ENCODE measurements at regions of chr14 and their contacts with region 1.

Region 1: GRCh38 chr14:21437063-21437901 is 18.6 kb downstream of the CHD8 start:
- DNase-seq: peak; percentile 99
- H3K4me3 ChIP-seq: peak overlapping the region; percentile 81 to 97
- H3K27ac ChIP-seq: peak overlapping the region; percentile 87 to 94
- H3K4me1 ChIP-seq: peaks cover 0 to 30% (median 18%) of the 10 kb centered on the region in 4 donors
- H3K27me3 ChIP-seq: no peaks in the 10 kb centered on the region
- CTCF ChIP-seq: peak in 1 of 2 experiments; percentile 11

Region 2: GRCh38 chr14:21455911-21456667 is 18.8 kb after region 1 on chr14 and contains the start of gene CHD8:
- intact Hi-C with region 1: loop called (anchors 1 kb)
- DNase-seq: peak; percentile 100
- H3K4me3 ChIP-seq: peak within 1 kb of the TSS; percentile 84 to 91
- H3K27ac ChIP-seq: peak within 1 kb of the TSS; percentile 84 to 95
- H3K4me1 ChIP-seq: peaks cover 0 to 32% (median 18%) of the 10 kb centered on the region in 4 donors
- H3K27me3 ChIP-seq: no peaks in the 10 kb centered on the region
- CTCF ChIP-seq: peak; percentile 46 to 48

Region 3: DNA sequence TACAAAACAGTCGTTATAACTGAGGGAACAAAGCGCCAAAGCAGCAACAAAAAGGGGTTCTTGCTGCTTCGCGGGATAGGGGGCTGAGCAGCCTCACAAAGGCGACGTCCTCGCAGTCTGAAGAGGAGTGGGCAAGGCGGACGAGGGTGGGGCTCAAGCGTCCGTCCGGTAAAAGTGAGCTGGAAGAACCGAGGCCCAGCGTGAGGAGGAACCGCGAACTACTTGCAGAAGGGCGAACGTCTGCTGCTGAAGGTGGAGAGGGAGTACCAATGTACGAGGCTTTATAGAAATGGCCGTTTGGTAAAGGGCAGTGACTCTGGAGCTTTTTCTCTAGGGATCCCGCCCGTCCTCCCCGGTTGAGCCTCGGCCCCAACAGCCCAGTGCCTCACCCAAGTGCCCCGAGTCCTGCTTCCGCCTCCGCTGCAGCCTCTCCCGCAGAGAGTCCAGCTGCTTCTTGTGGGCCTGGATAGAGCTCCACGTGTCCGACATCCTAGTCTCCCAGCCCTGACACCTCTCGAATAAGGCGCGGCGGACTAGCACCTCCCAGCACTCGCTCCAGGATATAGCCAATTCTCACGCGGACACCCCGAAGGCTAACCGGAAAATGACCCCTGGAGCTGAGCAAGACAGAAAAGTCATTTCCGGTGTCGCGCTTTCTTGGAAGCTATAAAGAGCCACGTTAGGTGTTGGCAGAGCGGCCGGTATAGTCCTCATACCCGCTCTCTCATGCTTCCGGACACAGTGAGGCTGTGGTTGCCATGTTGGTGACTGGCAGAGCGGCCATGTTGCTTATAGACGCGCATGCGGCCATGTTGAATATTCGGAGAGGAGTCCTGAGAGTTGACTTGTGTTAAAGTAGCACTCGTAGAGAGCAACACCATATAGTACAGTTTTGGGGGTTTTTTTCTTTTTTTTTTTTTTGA is 73.7 kb after region 1 on chr14 and contains the start of gene METTL3:
- intact Hi-C with region 1: loop called (anchors 5 kb)
- DNase-seq: peak; percentile 99
- H3K4me3 ChIP-seq: peak within 1 kb of the TSS; percentile 65 to 74
- H3K27ac ChIP-seq: peak within 1 kb of the TSS; percentile 71 to 85
- H3K4me1 ChIP-seq: peaks cover 0 to 21% (median 15%) of the 10 kb centered on the region in 4 donors
- H3K27me3 ChIP-seq: no peaks in the 10 kb centered on the region
- CTCF ChIP-seq: no peak

Region 4: DNA sequence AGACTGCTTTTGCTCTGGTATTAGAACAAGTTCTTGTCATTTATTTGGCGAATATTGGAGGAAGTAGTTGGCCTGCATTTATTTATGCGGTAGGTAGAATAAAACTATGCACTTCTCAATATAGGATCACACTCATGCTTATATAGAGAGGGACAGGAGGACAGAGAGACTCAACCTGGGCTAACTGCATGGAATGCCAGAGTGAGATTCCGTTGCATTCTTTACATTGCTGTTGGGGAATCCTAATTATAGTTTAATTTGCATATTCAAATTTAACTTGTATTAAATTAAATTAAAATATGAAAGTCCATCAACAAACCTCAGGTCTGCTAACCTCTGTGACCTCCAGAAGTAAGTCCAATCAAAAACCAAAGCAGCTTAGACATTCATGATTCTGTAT is 116.0 kb after region 1 on chr14:
- intact Hi-C with region 1: no loop called
- DNase-seq: no peak
- H3K4me3 ChIP-seq: no peak overlapping the region
- H3K27ac ChIP-seq: no peak overlapping the region
- H3K4me1 ChIP-seq: peaks cover 0 to 6% (median 2%) of the 10 kb centered on the region in 4 donors
- H3K27me3 ChIP-seq: no peaks in the 10 kb centered on the region
- CTCF ChIP-seq: no peak

Region 5: GRCh38 chr14:21589317-21589716 is 152.0 kb after region 1 on chr14:
- intact Hi-C with region 1: no loop called
- DNase-seq: no peak
- H3K4me3 ChIP-seq: no peak overlapping the region
- H3K27ac ChIP-seq: no peak overlapping the region
- H3K4me1 ChIP-seq: no peaks in the 10 kb centered on the region
- H3K27me3 ChIP-seq: peaks cover 0 to 5% of the 10 kb centered on the region in 2 donors
- CTCF ChIP-seq: no peak

Region 6: DNA sequence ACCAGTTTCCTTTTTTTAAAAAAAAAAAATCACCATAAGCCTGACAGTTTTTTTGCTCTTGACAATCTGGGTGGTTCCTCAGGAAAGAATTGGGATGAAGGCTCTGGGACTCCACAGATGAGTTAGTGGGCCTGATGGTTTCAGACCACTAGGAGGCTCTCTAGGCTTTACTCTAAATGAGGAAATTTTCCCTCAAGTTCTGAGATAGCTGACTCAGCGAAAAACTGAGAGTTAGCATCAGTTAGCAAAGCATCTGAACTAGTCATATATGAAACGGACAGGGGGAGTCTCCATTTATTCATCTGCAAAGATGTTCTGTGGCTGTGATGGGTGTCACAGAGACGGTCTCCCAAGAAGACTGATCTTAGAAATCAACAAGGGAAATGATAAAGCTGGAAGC is 550.7 kb after region 1 on chr14:
- intact Hi-C with region 1: no loop called
- DNase-seq: no peak
- H3K4me3 ChIP-seq: no peak overlapping the region
- H3K27ac ChIP-seq: no peak overlapping the region
- H3K4me1 ChIP-seq: no peaks in the 10 kb centered on the region
- H3K27me3 ChIP-seq: no peaks in the 10 kb centered on the region
- CTCF ChIP-seq: no peak

Measured in tibial artery (tissue), 4 donors.